AG04450 (cell line): ENCODE measurements at regions of chr15 and their contacts with region 1.

Region 1: GRCh38 chr15:101008158-101009139 is 89.3 kb downstream of the LRRK1 start:
- DNase-seq: no peak
- H3K4me3 ChIP-seq: peak overlapping the region; percentile 54
- H3K27ac ChIP-seq: no peak overlapping the region
- H3K27me3 ChIP-seq: no peaks in the 10 kb centered on the region
- CTCF ChIP-seq: peak; percentile 97

Region 2: DNA sequence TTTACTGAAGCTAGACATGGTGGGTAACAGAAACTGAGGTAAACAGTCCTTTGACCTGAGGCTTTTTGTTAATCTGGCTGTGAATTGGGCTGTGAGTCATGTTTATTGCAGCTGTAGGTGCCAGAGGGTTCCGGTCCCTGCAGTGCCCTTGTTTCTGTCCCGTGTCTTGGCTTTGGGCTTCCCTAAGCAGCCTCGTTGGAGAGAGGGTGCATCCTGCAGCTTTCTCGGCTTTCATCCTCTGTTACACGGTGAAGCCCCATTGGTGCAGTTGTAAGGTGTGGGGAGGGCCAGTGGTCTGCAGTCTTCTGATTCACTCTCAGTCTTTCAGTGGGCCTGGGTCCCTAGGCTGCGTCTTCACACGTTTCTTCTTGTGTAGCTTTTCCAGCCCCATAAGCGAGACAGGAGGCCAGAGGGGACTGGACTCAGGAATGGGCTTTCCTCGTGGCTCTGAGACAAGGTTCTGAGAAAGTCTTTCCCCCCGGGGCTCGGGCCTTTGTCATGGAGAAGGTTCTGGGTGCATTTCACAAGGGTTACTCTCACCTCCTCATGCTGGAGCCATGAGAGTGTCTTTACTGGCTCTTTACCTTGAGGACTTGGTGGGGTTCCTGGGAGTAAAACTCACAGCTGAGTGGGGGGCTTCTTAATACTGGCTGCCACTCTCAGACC is 372.9 kb before region 1 on chr15:
- CTCF ChIA-PET with region 1: interaction called, 52 read pairs
- POLR2A ChIA-PET with region 1: no interaction called
- DNase-seq: no peak
- H3K4me3 ChIP-seq: no peak overlapping the region
- H3K27ac ChIP-seq: no peak overlapping the region
- H3K27me3 ChIP-seq: no peaks in the 10 kb centered on the region
- CTCF ChIP-seq: no peak

Region 3: DNA sequence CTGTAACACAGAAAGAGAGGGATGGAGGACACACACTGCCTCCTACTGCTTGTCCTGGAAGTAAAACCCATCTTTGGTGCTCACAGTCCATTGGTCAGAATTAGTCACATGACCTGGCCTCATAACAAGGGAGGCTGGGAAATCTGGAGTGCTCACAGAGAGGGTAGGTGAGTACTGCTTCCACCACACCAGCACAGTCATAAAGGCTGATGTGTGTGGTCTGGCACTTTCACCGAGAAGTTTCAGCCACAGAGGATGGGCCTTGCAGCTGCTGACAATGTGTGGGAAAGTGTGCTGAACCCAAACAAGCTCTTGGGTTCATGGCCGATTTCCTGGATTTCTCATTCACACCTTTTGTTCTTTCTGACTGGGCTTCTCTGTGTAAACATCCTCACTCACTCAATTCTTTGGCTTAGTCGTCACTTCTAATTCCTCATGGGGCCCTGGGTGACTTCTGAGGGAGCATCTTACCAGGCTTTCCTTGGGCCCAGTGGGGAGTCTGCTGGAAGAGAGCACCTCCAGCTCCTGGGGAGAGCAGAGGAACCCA is 305.3 kb before region 1 on chr15:
- CTCF ChIA-PET with region 1: no interaction called
- POLR2A ChIA-PET with region 1: no interaction called
- DNase-seq: peak; percentile 56
- H3K4me3 ChIP-seq: no peak overlapping the region
- H3K27ac ChIP-seq: peak overlapping the region; percentile 34
- H3K27me3 ChIP-seq: no peaks in the 10 kb centered on the region
- CTCF ChIP-seq: no peak

Region 4: DNA sequence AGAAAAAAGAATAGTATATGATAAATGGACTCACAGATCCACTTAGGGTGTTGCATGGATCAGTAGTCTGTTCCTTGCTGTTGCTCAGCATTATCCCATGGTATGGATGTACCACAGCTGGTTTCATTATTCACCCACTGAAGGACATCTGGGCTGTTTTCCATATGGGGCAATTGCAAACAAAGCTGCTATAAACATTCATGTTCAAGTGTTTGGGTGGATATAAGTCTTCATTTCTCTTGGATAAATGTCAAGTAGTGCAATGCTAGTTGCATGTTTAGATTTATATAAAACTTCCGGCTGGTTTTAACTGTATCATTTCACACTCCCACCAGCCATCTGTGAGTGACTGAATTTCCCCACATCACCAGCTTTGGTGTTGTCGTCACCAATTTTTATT is 268.3 kb before region 1 on chr15:
- CTCF ChIA-PET with region 1: no interaction called
- POLR2A ChIA-PET with region 1: no interaction called
- DNase-seq: peak; percentile 86
- H3K4me3 ChIP-seq: no peak overlapping the region
- H3K27ac ChIP-seq: no peak overlapping the region
- H3K27me3 ChIP-seq: no peaks in the 10 kb centered on the region
- CTCF ChIP-seq: no peak

Region 5: DNA sequence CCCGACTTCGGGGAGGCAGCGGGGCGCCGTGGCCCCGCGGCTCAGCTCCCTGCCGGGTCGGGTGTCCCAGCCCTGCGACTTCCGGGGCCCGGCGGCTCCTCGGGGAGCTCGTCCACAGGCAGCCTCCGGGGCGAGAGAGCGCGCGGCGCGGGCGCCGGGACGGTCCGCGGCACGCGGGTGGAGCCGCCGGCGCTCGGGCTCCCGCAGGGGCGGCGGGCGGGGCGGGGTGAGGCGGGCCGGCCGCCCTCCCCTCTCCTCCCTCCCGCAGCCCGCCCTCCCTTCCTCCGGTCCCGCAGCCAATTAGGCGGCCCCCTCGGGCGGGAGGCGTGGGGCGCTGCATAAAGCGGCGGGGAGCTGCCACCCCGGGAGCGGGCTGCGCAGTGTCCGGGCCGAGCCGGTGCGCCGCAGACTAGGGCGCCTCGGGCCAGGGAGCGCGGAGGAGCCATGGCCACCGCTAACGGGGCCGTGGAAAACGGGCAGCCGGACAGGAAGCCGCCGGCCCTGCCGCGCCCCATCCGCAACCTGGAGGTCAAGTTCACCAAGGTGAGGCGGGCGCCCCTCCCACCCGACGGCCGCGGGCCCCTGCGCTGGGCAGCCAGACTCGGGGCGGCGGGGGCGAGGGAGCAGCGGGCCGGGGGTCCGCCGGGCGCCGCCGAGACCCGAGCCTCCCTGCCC is 128.8 kb before region 1 on chr15 and contains the start of gene ALDH1A3:
- CTCF ChIA-PET with region 1: interaction called, 45 read pairs
- POLR2A ChIA-PET with region 1: no interaction called
- DNase-seq: peak; percentile 16
- H3K4me3 ChIP-seq: peak within 1 kb of the TSS; percentile 58
- H3K27ac ChIP-seq: no peak within 1 kb of the TSS
- H3K27me3 ChIP-seq: peaks cover 30% of the 10 kb centered on the region
- CTCF ChIP-seq: no peak
- polyA plus RNA-seq, gene ALDH1A3: 19.5 and 20.6 TPM in 2 replicates

Region 6: DNA sequence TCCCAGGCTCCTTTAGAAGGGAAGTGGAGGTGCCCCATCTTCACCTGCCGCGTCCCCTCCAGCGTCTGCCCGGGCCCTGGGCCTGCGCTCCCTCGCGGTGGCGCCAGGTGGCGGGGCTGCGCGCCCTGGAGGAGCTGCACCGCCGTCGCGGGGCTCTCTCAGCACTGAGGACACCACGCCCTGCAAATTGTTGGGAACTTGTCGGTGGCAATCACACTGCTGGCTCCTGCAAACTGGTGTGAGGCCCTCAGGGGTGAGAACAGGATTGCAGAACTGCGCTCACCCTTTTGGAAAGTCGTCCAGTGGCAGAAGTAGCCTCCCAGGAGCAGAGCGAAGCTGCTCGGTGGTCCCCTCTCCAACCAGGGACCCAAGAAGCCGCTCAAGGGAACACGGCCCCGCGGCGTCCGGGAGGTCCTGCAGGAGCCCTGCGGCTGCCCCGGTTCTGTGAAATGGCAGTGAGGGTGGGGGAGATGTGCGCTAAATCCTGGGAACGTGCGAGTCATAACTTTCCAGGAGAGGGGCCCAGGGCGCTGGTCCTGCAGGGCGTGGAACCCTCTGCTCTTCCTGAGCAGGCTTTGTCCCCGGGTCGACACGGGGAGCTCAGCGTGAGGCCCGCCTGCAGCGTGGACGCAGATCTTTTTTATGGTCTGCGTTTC is 90.3 kb before region 1 on chr15:
- CTCF ChIA-PET with region 1: interaction called, 251 read pairs
- POLR2A ChIA-PET with region 1: interaction called, 4 read pairs
- DNase-seq: no peak
- H3K4me3 ChIP-seq: peak overlapping the region; percentile 66
- H3K27ac ChIP-seq: peak overlapping the region; percentile 21
- H3K27me3 ChIP-seq: no peaks in the 10 kb centered on the region
- CTCF ChIP-seq: peak; percentile 90

Region 7: GRCh38 chr15:100987143-100987542 is 21.3 kb before region 1 on chr15:
- CTCF ChIA-PET with region 1: interaction called, 14 read pairs
- POLR2A ChIA-PET with region 1: no interaction called
- DNase-seq: no peak
- H3K4me3 ChIP-seq: no peak overlapping the region
- H3K27ac ChIP-seq: no peak overlapping the region
- H3K27me3 ChIP-seq: no peaks in the 10 kb centered on the region
- CTCF ChIP-seq: no peak

Region 8: DNA sequence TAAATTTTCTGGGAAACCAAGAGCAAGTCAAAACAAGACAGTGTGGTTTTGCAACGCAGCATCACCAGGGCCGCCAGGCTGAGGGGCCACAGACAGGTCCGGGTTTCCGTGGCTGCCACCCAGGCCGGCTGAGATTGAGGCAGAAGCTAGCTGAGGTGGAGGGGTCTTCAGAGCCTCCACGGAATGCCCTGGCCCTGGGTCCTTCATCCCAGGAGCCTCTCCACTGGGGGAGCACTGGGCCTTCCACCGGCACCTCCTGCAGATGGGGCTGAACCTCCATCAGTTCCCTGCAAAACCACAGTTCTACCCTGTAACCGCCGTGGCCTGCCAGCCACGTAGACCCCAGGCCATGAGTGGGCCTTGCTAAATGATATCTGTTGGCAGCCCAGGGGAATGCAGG is 90.7 kb after region 1 on chr15:
- CTCF ChIA-PET with region 1: no interaction called
- POLR2A ChIA-PET with region 1: no interaction called
- DNase-seq: no peak
- H3K4me3 ChIP-seq: no peak overlapping the region
- H3K27ac ChIP-seq: no peak overlapping the region
- H3K27me3 ChIP-seq: no peaks in the 10 kb centered on the region
- CTCF ChIP-seq: no peak

Region 9: DNA sequence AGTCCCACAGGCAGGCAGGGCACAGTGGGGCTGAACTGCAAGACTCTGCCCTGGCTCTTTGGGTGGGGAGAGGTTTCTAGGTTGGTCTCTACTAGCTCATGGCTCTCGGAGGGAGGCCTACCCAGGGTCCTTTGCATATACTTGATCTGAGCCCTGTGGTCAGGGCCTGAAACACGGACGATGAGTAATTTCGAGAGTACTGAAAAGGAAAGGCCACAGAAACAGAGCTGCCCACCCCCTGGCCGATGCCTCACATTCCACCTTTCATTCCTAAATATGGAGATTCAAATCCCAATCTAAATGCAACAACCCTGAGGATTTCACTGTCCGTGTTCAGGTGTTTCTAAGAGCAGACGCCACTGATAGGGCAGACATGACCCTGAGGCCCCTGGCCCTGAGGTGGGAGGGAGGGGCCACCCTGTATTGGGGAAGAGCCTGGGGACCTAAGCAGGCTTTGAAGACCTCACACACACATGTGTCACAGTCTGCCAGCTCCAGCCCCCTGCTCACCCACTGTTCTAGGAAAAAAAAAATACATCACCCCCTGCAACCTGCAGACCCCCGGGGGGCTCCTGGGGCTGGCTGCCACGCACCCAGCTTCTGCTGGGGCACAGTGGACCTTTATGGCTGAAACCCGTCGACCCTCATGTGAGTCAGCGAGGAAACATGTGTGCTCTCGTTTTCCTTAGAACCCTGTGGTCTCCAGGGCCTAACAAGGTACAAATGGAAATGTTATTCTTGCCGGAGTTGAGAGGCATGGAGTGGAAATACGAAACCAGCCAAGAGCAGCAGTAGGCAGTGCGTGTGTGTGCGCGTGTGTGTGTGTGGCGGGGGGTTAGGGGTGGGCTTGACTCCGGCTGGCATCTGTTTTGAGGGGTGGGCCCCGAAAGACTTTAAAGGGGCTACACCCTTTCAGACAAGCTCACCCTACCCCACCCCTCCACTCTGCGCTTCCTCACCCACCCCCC is 130.7 kb after region 1 on chr15:
- CTCF ChIA-PET with region 1: no interaction called
- POLR2A ChIA-PET with region 1: no interaction called
- DNase-seq: no peak
- H3K4me3 ChIP-seq: no peak overlapping the region
- H3K27ac ChIP-seq: no peak overlapping the region
- H3K27me3 ChIP-seq: no peaks in the 10 kb centered on the region
- CTCF ChIP-seq: no peak

Region 10: DNA sequence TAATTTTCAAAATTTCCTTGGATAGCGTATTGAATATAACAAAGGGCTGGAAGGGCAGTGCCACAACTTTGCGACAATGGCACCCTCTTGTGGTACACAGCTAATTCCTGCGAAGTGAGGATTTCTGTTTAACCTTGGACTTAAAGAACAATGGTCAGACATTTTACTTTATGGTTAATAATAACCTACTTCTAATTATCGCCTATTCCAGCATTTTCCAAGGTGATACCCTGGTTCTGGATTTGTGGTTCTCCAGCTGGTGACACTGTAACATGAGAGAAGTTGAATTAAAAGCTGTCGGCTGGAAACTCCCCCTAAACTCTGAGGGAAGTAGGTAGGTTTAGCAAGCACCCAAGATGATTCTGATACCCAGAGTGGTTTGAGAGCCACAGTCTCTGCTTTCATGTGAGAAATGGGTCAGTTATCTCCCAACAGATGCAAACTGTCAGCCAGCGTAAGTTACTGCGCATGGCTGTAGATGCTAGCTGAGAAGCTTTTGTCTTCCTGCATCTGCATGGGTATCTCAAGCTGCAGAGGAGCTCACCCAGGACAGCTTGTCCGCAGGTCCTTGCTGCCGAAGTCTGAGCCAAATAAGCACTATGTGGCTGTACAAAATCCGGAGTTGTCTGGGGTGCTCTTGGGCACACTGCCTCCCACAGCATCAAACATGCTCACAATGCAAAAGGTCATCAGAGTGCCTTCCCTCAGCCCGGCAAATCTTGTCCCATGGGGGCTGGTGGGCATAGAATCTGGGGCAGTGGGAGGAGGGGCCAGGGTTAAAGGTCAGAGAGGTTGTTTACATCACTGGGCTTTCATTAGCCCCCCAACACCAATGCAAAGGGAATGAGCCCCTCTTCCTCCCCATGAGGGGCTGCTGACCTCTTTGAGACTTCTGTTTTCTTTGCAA is 250.0 kb after region 1 on chr15:
- CTCF ChIA-PET with region 1: interaction called, 40 read pairs
- POLR2A ChIA-PET with region 1: interaction called, 3 read pairs
- DNase-seq: no peak
- H3K4me3 ChIP-seq: no peak overlapping the region
- H3K27ac ChIP-seq: no peak overlapping the region
- H3K27me3 ChIP-seq: no peaks in the 10 kb centered on the region
- CTCF ChIP-seq: peak; percentile 78